A549 (cell line): ENCODE measurements at regions of chr12 and their contacts with region 1.

Region 1: GRCh38 chr12:100348657-100349454 is 8.0 kb upstream of the SLC17A8 start:
- DNase-seq: peak; percentile 34 to 57
- ATAC-seq: peak; percentile 82 to 83
- H3K4me3 ChIP-seq: no peak overlapping the region
- H3K27ac ChIP-seq: no peak overlapping the region
- H3K4me1 ChIP-seq: no peaks in the 10 kb centered on the region
- CTCF ChIP-seq: peak; percentile 84
- EP300 ChIP-seq: no peak
- POLR2A ChIP-seq: no peak
- RAD21 ChIP-seq: peak; percentile 83 to 93

Region 2: GRCh38 chr12:100234598-100235304 is 114.1 kb before region 1 on chr12:
- CTCF ChIA-PET with region 1: interaction called, 16 read pairs
- POLR2A ChIA-PET with region 1: no interaction called
- DNase-seq: peak; percentile 18 to 59
- ATAC-seq: peak; percentile 68 to 86
- H3K4me3 ChIP-seq: no peak overlapping the region
- H3K27ac ChIP-seq: no peak overlapping the region
- H3K4me1 ChIP-seq: peaks cover 6% of the 10 kb centered on the region; the same call in 2 of the 3 replicates
- CTCF ChIP-seq: peak; percentile 85
- EP300 ChIP-seq: no peak
- POLR2A ChIP-seq: no peak
- RAD21 ChIP-seq: peak; percentile 82 to 92

Region 3: DNA sequence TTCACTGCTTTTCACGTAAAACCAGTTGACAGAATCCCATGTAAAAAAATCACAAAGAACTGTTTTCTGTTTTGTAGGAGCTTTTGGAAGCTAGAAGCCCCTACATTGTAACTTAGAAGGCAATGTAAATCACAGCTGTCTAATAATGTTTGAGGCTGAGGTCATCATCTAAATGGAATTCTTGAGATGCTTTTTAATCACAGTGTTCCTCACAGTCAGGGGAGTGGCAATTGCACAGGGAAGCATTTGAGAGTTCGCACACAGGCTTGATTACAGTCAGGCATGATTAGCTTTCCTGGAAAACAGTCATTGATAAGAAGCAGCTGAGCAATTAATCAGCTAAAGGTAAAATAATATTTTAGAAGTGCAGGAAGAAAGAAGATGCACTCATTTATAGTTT is 11.0 kb after region 1 on chr12:
- CTCF ChIA-PET with region 1: interaction called, 13 read pairs
- POLR2A ChIA-PET with region 1: no interaction called
- DNase-seq: peak in 1 of 2 experiments; percentile 11
- ATAC-seq: no peak
- H3K4me3 ChIP-seq: no peak overlapping the region
- H3K27ac ChIP-seq: no peak overlapping the region
- H3K4me1 ChIP-seq: 0 out of 3 replicates have a peak, but pooled peaks cover 7% of the 10 kb centered on the region
- CTCF ChIP-seq: no peak
- EP300 ChIP-seq: no peak
- POLR2A ChIP-seq: no peak
- RAD21 ChIP-seq: no peak

Region 4: GRCh38 chr12:100554608-100555077 is 205.8 kb after region 1 on chr12:
- CTCF ChIA-PET with region 1: interaction called, 96 read pairs
- POLR2A ChIA-PET with region 1: no interaction called
- DNase-seq: peak; percentile 68 to 89
- ATAC-seq: peak; percentile 91 to 94
- H3K4me3 ChIP-seq: no peak overlapping the region
- H3K27ac ChIP-seq: no peak overlapping the region
- H3K4me1 ChIP-seq: peaks cover 11% of the 10 kb centered on the region; the same call in 2 of the 3 replicates
- CTCF ChIP-seq: peak; percentile 99
- EP300 ChIP-seq: no peak
- POLR2A ChIP-seq: no peak
- RAD21 ChIP-seq: peak; percentile 99

Region 5: DNA sequence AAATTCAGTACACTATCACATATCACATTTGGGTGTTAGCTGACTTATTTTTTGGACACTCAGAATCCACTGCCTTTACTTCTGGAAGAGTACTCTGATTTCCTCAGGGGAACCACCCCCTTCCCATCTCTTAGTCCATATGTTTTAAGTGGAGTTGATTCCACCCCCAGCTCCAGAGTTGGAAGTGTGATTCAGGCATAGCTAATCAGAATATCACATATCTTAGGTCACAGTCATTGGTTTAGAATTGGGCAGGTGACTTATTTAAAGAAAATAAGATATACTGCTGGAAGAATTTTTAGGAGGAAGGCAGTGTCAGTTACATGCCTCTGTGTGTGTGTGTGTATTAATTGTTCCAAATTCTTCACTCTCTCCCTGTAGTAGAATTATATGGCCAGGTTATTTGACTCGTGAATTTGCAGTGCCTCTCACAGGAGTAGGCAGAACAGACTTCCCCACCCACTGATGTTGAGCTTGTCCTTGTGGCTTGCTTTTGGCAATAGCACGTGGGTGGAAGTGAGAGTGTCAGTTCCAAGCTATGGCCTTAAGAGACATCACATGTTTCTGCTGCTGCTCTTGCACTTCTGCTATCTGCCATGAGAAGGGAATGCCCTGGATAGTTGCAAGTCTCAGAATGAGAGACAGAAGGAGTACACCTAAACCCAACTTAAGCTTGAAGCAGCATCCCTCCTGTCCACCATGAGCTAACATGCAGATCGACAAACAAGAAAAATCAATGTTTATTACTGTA is 218.2 kb after region 1 on chr12:
- CTCF ChIA-PET with region 1: interaction called, 10 read pairs
- POLR2A ChIA-PET with region 1: no interaction called
- DNase-seq: no peak
- ATAC-seq: peak in 1 of 2 experiments; percentile 63; a peak in 1 of 6 replicates
- H3K4me3 ChIP-seq: no peak overlapping the region
- H3K27ac ChIP-seq: no peak overlapping the region
- H3K4me1 ChIP-seq: no peaks in the 10 kb centered on the region
- CTCF ChIP-seq: no peak
- EP300 ChIP-seq: no peak
- POLR2A ChIP-seq: no peak
- RAD21 ChIP-seq: no peak

Region 6: DNA sequence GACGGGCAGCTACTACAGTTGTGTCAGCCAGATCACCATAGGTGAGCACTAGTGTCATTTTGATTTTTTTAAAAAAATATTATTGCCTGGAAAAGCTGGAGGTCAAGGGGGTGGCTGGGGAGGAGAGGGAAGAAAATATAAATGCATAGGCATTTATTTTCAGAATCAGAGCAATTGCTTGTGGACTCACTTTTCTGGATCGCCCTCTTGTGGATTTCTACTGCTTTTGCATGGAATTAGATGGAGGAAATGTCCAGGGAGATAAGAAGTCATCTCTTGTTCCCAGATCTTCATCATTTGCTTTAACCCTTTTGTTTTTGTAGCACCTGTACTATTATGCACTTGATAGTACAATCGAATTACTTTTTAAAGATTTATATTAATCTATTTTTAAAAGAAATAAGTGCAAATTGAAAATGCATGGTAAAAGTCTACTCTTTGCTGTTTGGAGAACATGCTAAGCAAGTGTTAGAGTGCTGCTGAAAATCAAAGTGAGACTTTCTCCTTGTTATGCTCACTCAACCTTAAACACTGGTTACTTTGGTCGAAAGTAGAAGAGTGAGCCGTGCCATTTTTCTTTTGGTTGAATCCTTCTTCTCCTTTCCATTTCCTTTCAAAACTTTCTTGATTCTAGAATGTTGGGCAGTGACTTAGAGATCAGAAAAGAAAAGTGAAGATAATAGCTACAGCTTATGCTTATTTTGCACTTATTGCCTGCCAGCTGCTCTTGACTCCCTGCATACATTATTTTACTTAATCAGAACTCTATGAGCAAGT is 385.1 kb after region 1 on chr12:
- CTCF ChIA-PET with region 1: interaction called, 22 read pairs
- POLR2A ChIA-PET with region 1: no interaction called
- DNase-seq: peak; percentile 17 to 60
- ATAC-seq: peak in 1 of 2 experiments; percentile 87; a peak in 3 of 6 replicates
- H3K4me3 ChIP-seq: no peak overlapping the region
- H3K27ac ChIP-seq: no peak overlapping the region
- H3K4me1 ChIP-seq: no peaks in the 10 kb centered on the region
- CTCF ChIP-seq: peak; percentile 64
- EP300 ChIP-seq: no peak
- POLR2A ChIP-seq: no peak
- RAD21 ChIP-seq: peak; percentile 54 to 60